ENCODE measurements at regions of chr3 and their contacts with region 1.

Region 1: GRCh38 chr3:64599651-64600050 is 88.1 kb downstream of the ADAMTS9 start:
- DNase-seq: no peak
- H3K4me3 ChIP-seq: no peak overlapping the region
- H3K4me3 Mint-ChIP-seq: no peak overlapping the region
- H3K27ac Mint-ChIP-seq: no peak overlapping the region
- H3K4me1 ChIP-seq: no peaks in the 10 kb centered on the region
- H3K4me1 Mint-ChIP-seq: no peaks in the 10 kb centered on the region
- H3K27me3 ChIP-seq: no peaks in the 10 kb centered on the region
- H3K27me3 Mint-ChIP-seq: no peaks in the 10 kb centered on the region
- CTCF ChIP-seq: no peak

Region 2: GRCh38 chr3:64561325-64561843 is 38.3 kb before region 1 on chr3:
- CTCF ChIA-PET with region 1: no interaction called
- POLR2A ChIA-PET with region 1: interaction called, 12 read pairs
- intact Hi-C with region 1: no loop called
- DNase-seq: no peak
- H3K4me3 ChIP-seq: no peak overlapping the region
- H3K4me3 Mint-ChIP-seq: no peak overlapping the region
- H3K27ac Mint-ChIP-seq: no peak overlapping the region
- H3K4me1 ChIP-seq: no peaks in the 10 kb centered on the region
- H3K4me1 Mint-ChIP-seq: no peaks in the 10 kb centered on the region
- H3K27me3 ChIP-seq: no peaks in the 10 kb centered on the region
- H3K27me3 Mint-ChIP-seq: no peaks in the 10 kb centered on the region
- CTCF ChIP-seq: no peak

Region 3: DNA sequence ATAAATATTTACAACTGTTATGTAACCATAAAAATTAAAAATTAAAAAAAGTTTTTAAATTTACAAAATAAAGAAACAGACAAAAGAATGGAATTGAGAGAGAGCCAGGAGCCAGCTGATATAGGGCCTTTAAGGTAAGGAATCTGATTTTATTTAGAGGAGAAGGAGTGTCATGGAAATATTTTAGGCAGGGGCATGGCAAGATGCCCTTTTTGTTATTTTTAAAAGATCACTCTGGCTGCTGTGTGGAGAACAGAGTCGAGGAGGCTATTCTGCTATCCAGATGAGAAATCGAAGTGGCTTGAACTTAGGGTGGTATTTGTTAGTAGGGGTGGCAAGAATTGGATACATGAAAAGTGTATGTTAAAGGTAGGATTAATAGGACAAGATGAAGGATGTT is 97.2 kb after region 1 on chr3:
- CTCF ChIA-PET with region 1: no interaction called
- POLR2A ChIA-PET with region 1: no interaction called
- intact Hi-C with region 1: no loop called
- DNase-seq: no peak
- H3K4me3 ChIP-seq: no peak overlapping the region
- H3K4me3 Mint-ChIP-seq: no peak overlapping the region
- H3K27ac Mint-ChIP-seq: no peak overlapping the region
- H3K4me1 ChIP-seq: no peaks in the 10 kb centered on the region
- H3K4me1 Mint-ChIP-seq: no peaks in the 10 kb centered on the region
- H3K27me3 ChIP-seq: no peaks in the 10 kb centered on the region
- H3K27me3 Mint-ChIP-seq: no peaks in the 10 kb centered on the region
- CTCF ChIP-seq: no peak